Activated CD4-positive, alpha-beta memory T cell treated with anti-CD3 and anti-CD28 coated beads, Interleukin-2, amount 10 ng/mL, durations not matched to agents 7 days and 5 days (primary cell): ENCODE measurements at regions of chr1 and their contacts with region 1.

Region 1: GRCh38 chr1:207579436-207579799 is 65.5 kb upstream of the CR1L start:
- DNase-seq: peak; percentile 54
- H3K4me3 Mint-ChIP-seq: no peak overlapping the region
- H3K27ac Mint-ChIP-seq: no peak overlapping the region
- H3K4me1 Mint-ChIP-seq: peaks cover 7% of the 10 kb centered on the region
- H3K27me3 Mint-ChIP-seq: peaks cover 23% of the 10 kb centered on the region

Region 2: GRCh38 chr1:207414606-207415108 is 164.8 kb before region 1 on chr1:
- CTCF ChIA-PET with region 1: no interaction called
- POLR2A ChIA-PET with region 1: no interaction called
- DNase-seq: peak; percentile 24
- H3K4me3 Mint-ChIP-seq: no peak overlapping the region
- H3K27ac Mint-ChIP-seq: no peak overlapping the region
- H3K4me1 Mint-ChIP-seq: peaks cover 12% of the 10 kb centered on the region
- H3K27me3 Mint-ChIP-seq: peaks cover 5% of the 10 kb centered on the region

Region 3: GRCh38 chr1:207603777-207604176 is 24.4 kb after region 1 on chr1:
- CTCF ChIA-PET with region 1: no interaction called
- POLR2A ChIA-PET with region 1: no interaction called
- DNase-seq: no peak
- H3K4me3 Mint-ChIP-seq: no peak overlapping the region
- H3K27ac Mint-ChIP-seq: no peak overlapping the region
- H3K4me1 Mint-ChIP-seq: no peaks in the 10 kb centered on the region
- H3K27me3 Mint-ChIP-seq: peaks cover 20% of the 10 kb centered on the region

Region 4: GRCh38 chr1:207619871-207620542 is 40.6 kb after region 1 on chr1:
- CTCF ChIA-PET with region 1: interaction called, 11 read pairs
- POLR2A ChIA-PET with region 1: no interaction called
- DNase-seq: no peak
- H3K4me3 Mint-ChIP-seq: no peak overlapping the region
- H3K27ac Mint-ChIP-seq: no peak overlapping the region
- H3K4me1 Mint-ChIP-seq: no peaks in the 10 kb centered on the region
- H3K27me3 Mint-ChIP-seq: peaks cover 12% of the 10 kb centered on the region